ENCODE measurements at regions of chr17 and their contacts with region 1.

Region 1: GRCh38 chr17:15502369-15503112 is 35.1 kb upstream of the CDRT4 start:
- DNase-seq: peak; percentile 71 to 76
- ATAC-seq: peak; percentile 89 to 97
- H3K4me3 ChIP-seq: no peak overlapping the region
- H3K27ac ChIP-seq: peak overlapping the region; percentile 9 to 56; a peak in 2 of 6 replicates
- H3K4me1 ChIP-seq: peaks cover 5% of the 10 kb centered on the region; the same call in 1 of the 3 replicates
- CTCF ChIP-seq: peak; percentile 93
- EP300 ChIP-seq: no peak
- POLR2A ChIP-seq: no peak
- RAD21 ChIP-seq: peak; percentile 95 to 97

Region 2: GRCh38 chr17:15076991-15077663 is 425.4 kb before region 1 on chr17:
- CTCF ChIA-PET with region 1: no interaction called
- POLR2A ChIA-PET with region 1: no interaction called
- DNase-seq: no peak
- ATAC-seq: no peak
- H3K4me3 ChIP-seq: no peak overlapping the region
- H3K27ac ChIP-seq: no peak overlapping the region
- H3K4me1 ChIP-seq: no peaks in the 10 kb centered on the region
- CTCF ChIP-seq: no peak
- EP300 ChIP-seq: no peak
- POLR2A ChIP-seq: no peak
- RAD21 ChIP-seq: no peak

Region 3: DNA sequence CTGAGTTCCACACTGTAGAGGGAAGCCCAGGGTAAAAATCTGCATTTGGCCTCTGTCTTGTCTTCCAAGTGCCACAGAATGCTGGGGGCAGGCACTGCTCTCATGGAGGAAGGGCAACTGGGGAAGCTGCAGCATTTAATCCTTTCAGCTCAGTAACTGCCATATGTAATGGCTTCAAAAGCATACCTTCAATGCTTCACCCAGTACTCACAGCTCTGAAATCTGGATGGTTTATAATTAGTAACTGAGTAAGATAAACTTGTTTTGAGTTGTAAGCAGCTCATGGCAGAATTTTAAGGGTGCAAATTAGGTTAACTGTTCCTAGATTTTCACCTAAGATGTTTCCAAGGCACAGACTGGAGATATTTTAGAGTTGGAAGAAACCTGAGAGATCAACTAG is 261.9 kb before region 1 on chr17:
- CTCF ChIA-PET with region 1: interaction called, 13 read pairs
- POLR2A ChIA-PET with region 1: no interaction called
- DNase-seq: no peak
- ATAC-seq: no peak
- H3K4me3 ChIP-seq: no peak overlapping the region
- H3K27ac ChIP-seq: no peak overlapping the region
- H3K4me1 ChIP-seq: no peaks in the 10 kb centered on the region
- CTCF ChIP-seq: no peak
- EP300 ChIP-seq: no peak
- POLR2A ChIP-seq: no peak
- RAD21 ChIP-seq: no peak

Region 4: DNA sequence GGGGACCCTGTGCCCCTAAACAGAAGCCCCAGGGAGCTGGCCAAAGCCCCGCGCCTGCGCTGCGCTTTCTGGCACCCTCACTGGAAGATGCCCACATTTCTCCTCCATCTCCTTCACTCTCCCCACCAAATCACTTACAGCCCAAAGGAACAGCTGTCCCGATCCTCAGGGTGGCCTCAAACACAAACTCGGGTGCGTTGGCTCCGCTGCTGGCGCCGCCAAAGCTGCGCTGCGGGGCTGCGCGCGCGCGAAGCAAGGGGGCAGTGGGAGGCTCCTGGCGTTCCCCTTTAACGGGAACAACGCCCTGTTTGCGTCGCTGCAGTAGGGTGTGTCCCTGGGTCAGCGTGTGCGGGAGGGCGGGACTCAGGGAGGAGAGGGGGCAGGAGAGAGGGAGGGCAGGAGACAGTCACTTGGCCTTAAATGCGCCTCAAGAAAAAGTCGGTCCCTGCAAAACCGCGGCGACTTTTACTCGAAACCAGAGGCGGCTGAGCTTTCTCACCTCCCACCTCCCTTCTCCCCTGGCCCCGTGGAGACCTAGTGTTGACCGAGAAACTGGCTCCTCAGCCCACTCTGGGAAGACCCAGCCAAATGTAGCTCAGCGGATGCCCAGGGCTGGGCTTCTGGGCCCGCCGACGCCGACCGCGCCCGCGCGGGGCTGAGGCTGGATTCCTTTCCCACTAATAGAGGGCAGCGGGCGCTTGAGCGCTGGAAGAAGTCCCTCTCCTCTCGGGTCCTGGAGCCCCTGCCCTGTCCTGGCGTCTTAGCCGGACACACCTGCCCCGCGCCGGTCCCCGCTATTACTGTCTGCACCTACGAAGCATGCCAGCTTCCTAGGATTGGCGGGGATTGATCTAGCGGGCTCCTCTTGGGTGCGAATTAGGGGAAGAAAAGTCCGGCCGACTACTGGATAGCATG is 240.0 kb before region 1 on chr17:
- CTCF ChIA-PET with region 1: interaction called, 248 read pairs
- POLR2A ChIA-PET with region 1: interaction called, 5 read pairs
- DNase-seq: peak; percentile 97 to 98
- ATAC-seq: peak; percentile 74 to 87
- H3K4me3 ChIP-seq: peak overlapping the region; percentile 70
- H3K27ac ChIP-seq: peak overlapping the region; percentile 80 to 87
- H3K4me1 ChIP-seq: peaks cover 30% of the 10 kb centered on the region
- CTCF ChIP-seq: no peak
- EP300 ChIP-seq: no peak
- POLR2A ChIP-seq: peak; percentile 73
- RAD21 ChIP-seq: peak in 1 of 2 experiments; percentile 40; a peak in 2 of 5 replicates

Region 5: GRCh38 chr17:15323131-15323530 is 179.4 kb before region 1 on chr17:
- CTCF ChIA-PET with region 1: interaction called, 10 read pairs
- POLR2A ChIA-PET with region 1: no interaction called
- DNase-seq: no peak
- ATAC-seq: no peak
- H3K4me3 ChIP-seq: no peak overlapping the region
- H3K27ac ChIP-seq: no peak overlapping the region
- H3K4me1 ChIP-seq: no peaks in the 10 kb centered on the region
- CTCF ChIP-seq: no peak
- EP300 ChIP-seq: no peak
- POLR2A ChIP-seq: no peak
- RAD21 ChIP-seq: no peak

Region 6: GRCh38 chr17:15418781-15419420 is 83.6 kb before region 1 on chr17:
- CTCF ChIA-PET with region 1: interaction called, 10 read pairs
- POLR2A ChIA-PET with region 1: no interaction called
- DNase-seq: no peak
- ATAC-seq: no peak
- H3K4me3 ChIP-seq: no peak overlapping the region
- H3K27ac ChIP-seq: no peak overlapping the region
- H3K4me1 ChIP-seq: no peaks in the 10 kb centered on the region
- CTCF ChIP-seq: no peak
- EP300 ChIP-seq: no peak
- POLR2A ChIP-seq: no peak
- RAD21 ChIP-seq: no peak

Region 7: DNA sequence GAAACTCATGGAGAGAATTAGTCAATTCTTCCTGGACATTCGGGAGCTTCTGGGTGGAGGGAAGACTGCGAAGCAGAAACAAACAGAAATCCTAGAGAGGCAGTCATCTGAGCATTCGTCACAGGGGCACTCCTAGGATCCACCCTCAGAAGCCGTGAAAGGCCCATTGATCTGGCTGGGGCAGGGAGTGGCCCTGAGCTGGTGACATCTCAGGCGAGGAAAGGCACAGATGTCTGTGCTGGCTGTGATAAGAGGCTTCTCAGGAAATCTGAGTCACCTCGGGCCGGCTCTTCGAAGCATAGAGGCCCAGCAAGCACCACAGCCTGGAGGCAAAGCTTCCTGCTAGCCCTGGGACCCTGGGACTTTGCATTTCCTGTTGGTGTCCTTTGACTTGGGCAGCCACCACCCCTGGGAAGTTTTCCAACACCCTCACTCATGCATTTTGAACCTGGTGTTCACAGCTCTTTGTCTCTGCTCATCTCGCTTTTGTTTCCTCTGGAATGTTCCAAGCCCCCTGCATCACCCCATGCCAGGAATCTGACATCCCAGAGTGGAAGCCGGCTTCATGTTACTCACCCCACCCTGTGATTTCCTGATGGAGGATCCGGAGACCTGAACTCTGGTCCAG is 11.8 kb before region 1 on chr17:
- CTCF ChIA-PET with region 1: interaction called, 75 read pairs
- POLR2A ChIA-PET with region 1: no interaction called
- DNase-seq: no peak
- ATAC-seq: no peak
- H3K4me3 ChIP-seq: no peak overlapping the region
- H3K27ac ChIP-seq: no peak overlapping the region
- H3K4me1 ChIP-seq: no peaks in the 10 kb centered on the region
- CTCF ChIP-seq: no peak
- EP300 ChIP-seq: no peak
- POLR2A ChIP-seq: no peak
- RAD21 ChIP-seq: no peak

Measured in A549 (cell line).